ENCODE measurements at regions of chr1 and their contacts with region 1.

Region 1: DNA sequence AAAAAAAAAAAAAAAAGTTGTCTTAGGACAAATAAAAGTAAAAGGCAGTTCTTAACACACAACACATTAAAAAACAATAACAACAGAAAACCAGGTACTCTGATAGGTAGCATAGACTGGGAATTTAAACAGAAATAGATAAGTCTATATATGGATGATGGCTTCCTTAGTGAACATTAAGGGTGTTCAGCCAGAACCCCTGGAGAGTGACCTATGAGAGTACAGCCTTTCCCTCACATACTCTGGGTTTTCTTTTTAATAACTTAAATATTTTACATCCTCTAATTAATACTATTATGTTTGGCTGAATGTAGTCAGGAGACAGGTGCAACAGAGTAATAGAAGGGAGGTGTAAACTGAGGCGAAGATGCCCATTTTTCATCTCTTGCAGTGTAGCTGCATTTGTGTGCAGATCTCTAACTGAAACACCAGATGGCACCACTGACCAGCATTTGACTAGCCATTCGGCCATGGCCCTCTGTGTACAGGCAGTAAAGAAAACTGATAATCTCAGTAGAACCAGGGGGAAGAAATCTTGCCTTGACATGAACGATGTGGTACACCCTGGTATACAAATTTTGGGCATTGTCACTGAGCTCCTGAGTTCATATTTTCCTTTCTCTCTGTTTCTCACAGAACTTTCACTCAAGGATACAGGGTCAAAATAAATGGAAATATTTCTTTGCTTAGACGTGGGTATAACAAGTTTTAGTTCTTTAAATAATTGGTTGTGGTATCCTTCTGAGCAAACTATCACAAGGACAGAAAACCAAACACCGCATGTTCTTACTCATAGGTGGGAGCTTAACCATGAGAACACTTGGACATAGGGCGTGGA is 7.6 kb downstream of the TTF2 start:
- DNase-seq: peak; percentile 35 to 95 (median 68)

Region 2: DNA sequence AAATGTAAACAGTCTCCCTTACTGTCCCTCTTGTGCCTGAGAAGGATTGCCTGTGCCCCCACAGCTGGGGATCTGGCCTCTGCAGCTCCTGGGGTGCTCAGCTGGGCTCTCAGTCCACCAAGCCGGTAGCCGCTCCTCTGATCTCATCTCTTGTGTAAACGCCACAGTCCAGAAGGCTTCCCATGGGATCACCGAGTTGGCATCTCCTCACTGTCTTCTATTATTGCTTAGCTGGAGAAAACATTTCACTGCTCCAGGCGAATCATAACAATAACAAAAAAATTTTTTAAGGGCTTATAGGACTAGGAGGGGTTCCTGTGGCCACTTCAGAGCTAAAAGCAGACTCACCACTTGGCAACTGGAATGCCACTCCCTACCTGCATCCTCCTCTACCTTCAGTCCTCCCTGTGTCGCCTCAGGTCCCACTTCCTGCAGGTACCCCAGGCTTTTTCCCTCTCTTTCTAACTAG is 618.9 kb before region 1 on chr1:
- intact Hi-C with region 1: no loop called
- DNase-seq: no peak

Region 3: GRCh38 chr1:117121776-117122697 is 54.3 kb after region 1 on chr1:
- intact Hi-C with region 1: loop called (anchors 2 kb)
- DNase-seq: peak; percentile 94 to 99 (median 97)

Region 4: DNA sequence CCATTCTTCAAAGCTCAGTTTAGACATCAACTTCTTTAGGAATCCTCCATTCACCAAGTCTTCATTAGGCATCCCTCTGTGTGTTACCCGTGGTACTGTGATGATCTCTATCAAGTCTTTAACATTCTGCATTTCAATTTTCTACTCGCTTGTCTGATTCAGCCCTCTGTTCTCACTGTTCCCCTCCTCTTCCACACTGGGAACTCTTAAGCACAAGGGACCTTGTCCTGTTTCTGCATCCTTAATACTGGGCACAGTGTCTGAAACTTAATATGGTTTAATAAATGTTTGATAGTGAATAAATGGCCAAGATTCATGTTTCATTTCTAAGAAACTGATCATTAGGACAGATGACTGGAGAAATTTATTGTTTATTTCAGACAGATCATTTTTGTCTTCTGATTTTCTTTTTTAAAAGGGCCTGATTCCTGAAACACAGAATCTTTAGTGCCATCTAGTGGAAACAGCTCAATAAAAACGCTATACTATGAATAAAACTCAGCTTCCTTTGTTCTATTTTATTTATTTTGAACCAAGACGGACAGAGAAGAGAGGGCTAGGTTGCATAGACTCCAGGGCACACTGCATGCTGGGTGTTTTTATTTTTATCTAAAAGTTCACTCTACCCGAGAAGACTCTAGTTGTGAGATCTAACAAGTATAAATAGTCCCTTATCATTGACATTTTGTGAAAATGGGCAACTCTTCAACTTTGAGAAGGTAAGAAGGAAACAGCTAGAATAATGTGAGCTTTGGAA is 60.7 kb after region 1 on chr1:
- intact Hi-C with region 1: loop called (anchors 2 kb)
- DNase-seq: no peak

Region 5: GRCh38 chr1:117284399-117285215 is 216.9 kb after region 1 on chr1:
- intact Hi-C with region 1: loop called (anchors 1 kb)
- DNase-seq: no peak

Measured in posterior cingulate gyrus (tissue), 11 donors.